ENCODE measurements at regions of chr3 and their contacts with region 1.

Region 1: GRCh38 chr3:126287536-126288241 is 69.5 kb downstream of the KLF15 start:
- DNase-seq: peak; percentile 67 to 79
- ATAC-seq: peak; percentile 80 to 81
- H3K4me3 ChIP-seq: peak overlapping the region; percentile 55 to 65 (median 58)
- H3K27ac ChIP-seq: peak overlapping the region; percentile 85 to 93 (median 90)
- H3K4me1 ChIP-seq: peaks cover 18 to 19% of the 10 kb centered on the region in 2 donors
- H3K27me3 ChIP-seq: no peaks in the 10 kb centered on the region
- CTCF ChIP-seq: no peak
- POLR2A ChIP-seq: peak; percentile 38 to 41

Region 2: GRCh38 chr3:126267226-126267975 is 20.3 kb before region 1 on chr3:
- in situ Hi-C with region 1: no loop called
- intact Hi-C with region 1: loop called (anchors 1 kb)
- DNase-seq: peak; percentile 61 to 83
- ATAC-seq: peak; percentile 55 to 63
- H3K4me3 ChIP-seq: peak overlapping the region; percentile 11 to 53 (median 46)
- H3K27ac ChIP-seq: peak overlapping the region; percentile 86 to 92 (median 90)
- H3K4me1 ChIP-seq: peaks cover 44 to 51% of the 10 kb centered on the region in 2 donors
- H3K27me3 ChIP-seq: no peaks in the 10 kb centered on the region
- CTCF ChIP-seq: peak in 2 of 5 experiments; percentile 36 to 40
- POLR2A ChIP-seq: peak; percentile 48 to 72

Measured in gastrocnemius medialis (tissue), 4 donors.